ENCODE measurements at regions of chr19 and their contacts with region 1.

Region 1: GRCh38 chr19:55460670-55461258 is 678 bp downstream of the ISOC2 start:
- DNase-seq: peak; percentile 66
- H3K4me3 Mint-ChIP-seq: peak overlapping the region; percentile 84
- H3K27ac Mint-ChIP-seq: peak overlapping the region; percentile 90
- H3K4me1 Mint-ChIP-seq: peaks cover 24% of the 10 kb centered on the region
- H3K27me3 Mint-ChIP-seq: peaks cover 47% of the 10 kb centered on the region
- CTCF ChIP-seq: no peak

Region 2: DNA sequence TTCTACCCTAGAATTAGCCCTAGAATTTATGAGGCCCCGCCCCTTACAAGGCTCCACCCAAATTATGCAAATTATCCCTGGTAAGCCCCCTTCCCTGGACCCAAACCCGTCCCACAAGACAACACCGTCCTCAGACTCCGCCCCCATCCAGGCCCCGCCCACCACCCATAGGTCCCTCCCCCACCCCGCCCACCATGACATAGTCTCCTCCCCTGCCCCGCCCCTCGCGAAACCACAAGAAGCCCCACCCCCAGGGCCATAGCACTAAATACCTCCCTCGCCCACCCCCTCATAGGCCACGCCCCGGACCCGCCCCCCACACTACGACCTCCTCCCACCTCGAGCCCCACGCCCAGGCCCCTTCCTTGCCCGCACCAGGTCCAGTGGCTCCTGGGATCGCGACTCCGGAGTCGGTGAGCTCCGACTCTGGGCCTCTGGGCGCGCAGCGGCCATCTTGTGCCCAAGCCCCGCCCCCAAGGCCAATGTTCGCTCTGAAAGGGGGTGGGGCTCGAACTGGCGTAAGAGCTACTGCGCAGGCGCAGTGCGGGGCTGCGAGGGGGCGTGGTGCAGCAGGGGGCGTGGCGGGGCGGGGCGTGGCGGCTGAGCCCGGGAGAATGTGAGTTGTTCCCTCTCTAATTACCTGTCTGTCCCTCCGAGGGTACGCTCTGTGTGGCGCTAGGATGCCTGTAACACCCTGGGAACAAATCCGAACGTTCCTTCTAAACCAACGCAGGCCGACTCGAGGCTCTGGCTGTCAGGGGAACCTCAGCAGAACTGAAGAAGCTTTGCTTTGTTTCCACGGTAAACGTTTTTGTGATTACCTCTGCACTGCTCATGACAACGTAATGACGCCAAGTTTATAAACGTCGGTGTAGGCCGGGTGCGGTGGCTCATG is 163.6 kb after region 1 on chr19 and contains the start of gene ZNF784:
- CTCF ChIA-PET with region 1: interaction called, 10 read pairs
- intact Hi-C with region 1: no loop called
- DNase-seq: peak; percentile 97
- H3K4me3 Mint-ChIP-seq: peak within 1 kb of the TSS; percentile 92
- H3K27ac Mint-ChIP-seq: peak within 1 kb of the TSS; percentile 95
- H3K4me1 Mint-ChIP-seq: peaks cover 19% of the 10 kb centered on the region
- H3K27me3 Mint-ChIP-seq: no peaks in the 10 kb centered on the region
- CTCF ChIP-seq: no peak
- total RNA-seq, gene ZNF784: 6.0 and 7.1 TPM in 2 replicates

Measured in Calu3 (cell line).